ENCODE measurements at regions of chr17 and their contacts with region 1.

Region 1: DNA sequence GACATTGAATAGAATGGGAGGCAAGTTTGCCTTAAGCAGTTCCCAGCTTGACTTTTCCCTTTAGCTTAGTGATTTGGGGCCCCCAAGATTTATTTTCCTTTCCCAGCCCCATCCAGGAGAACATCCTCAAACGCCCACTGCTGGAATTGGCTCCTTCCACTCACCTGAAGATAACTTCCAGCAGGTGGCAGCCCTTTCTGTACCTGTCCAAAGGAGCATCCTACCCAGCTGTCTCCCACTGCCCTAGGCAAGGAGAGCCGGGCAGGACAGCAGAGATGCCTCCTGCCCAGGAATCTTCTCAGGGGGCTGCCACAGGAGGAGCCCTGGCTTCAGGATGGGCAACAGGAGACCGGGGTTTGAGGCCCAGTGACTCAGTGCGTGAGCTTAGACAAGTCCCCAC is 6.4 kb downstream of the CACNG5 start:
- DNase-seq: no peak
- H3K4me3 ChIP-seq: no peak overlapping the region
- H3K27ac ChIP-seq: no peak overlapping the region
- H3K4me1 ChIP-seq: no peaks in the 10 kb centered on the region
- H3K27me3 ChIP-seq: peaks cover 1% of the 10 kb centered on the region
- CTCF ChIP-seq: peak in 1 of 2 donors; percentile 37

Region 2: GRCh38 chr17:66920935-66921348 is 79.6 kb after region 1 on chr17:
- CTCF ChIA-PET with region 1: no interaction called
- dilution Hi-C with region 1: loop called (anchors 5 kb)
- in situ Hi-C with region 1: no loop called
- intact Hi-C with region 1: no loop called
- DNase-seq: no peak
- H3K4me3 ChIP-seq: no peak overlapping the region
- H3K27ac ChIP-seq: no peak overlapping the region
- H3K4me1 ChIP-seq: no peaks in the 10 kb centered on the region
- H3K27me3 ChIP-seq: no peaks in the 10 kb centered on the region
- CTCF ChIP-seq: no peak

Measured in mammary epithelial cell (primary cell).